Activated CD4-positive, alpha-beta T cell treated with anti-CD3 and anti-CD28 coated beads for 36 hours (primary cell): ENCODE measurements at regions of chr6 and their contacts with region 1.

Region 1: DNA sequence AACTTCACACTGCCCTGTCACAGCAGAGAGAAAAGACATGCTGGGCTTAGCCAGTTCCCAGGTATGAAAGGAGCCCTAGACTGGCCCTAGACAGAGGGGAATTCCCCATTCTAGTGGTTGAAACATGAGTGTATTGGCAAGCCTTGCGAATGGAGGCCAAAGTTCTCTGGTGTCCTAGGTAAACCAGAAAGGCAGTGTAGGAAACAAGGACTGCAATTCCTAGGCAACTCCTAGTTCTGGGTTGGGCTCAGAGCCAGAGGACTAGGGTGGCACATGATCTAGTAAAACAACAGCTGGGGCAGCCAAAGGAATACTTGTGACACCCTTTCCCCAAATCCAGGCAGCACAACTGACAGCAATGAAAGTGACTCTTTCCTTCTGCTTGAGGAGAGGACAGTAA is 265.0 kb upstream of the EPHA7 start:
- DNase-seq: no peak
- ATAC-seq: no peak
- H3K4me3 Mint-ChIP-seq: no peak overlapping the region
- H3K27ac Mint-ChIP-seq: no peak overlapping the region
- H3K4me1 Mint-ChIP-seq: no peaks in the 10 kb centered on the region
- H3K27me3 Mint-ChIP-seq: no peaks in the 10 kb centered on the region

Region 2: GRCh38 chr6:92479831-92480230 is 1204.5 kb before region 1 on chr6:
- CTCF ChIA-PET with region 1: no interaction called
- POLR2A ChIA-PET with region 1: no interaction called
- intact Hi-C with region 1: loop called in 1 of 2 experiments (anchors 10 kb)
- DNase-seq: no peak
- ATAC-seq: no peak
- H3K4me3 Mint-ChIP-seq: no peak overlapping the region
- H3K27ac Mint-ChIP-seq: no peak overlapping the region
- H3K4me1 Mint-ChIP-seq: no peaks in the 10 kb centered on the region
- H3K27me3 Mint-ChIP-seq: no peaks in the 10 kb centered on the region

Region 3: DNA sequence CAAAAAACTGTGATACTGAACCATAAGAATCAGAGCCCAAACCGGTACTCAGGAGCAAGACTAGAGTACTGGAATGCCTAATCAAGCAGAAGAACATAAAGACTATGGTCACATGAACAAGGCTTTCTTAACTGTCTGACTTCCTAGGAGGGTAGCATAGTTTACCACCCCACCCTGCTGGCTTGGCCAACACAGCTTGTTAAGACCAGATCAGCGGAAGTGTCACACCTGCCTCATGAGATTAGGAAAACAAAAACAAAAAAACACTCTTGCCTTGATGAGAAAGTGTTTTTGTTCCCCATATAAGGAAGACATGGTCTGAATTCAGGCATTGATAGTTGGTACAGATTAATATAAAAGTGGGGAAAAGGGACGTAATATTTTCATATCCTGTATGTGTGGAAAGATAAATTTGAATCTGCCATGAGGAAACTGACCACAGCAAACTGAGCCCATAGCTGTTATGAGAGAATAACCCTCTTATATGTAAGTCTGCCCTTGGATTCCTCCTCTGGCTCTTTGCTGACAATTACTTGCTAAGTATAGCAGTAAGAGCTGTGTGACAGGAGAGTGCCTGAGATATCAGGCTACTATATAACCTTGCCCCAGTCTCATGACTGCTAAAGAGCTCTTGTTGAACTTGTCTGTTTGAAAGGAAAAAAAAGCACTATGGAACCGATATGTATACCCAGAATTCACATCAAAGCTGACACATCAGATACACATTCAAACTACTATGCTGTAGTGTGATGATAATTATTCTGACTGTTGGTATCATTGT is 462.1 kb before region 1 on chr6:
- CTCF ChIA-PET with region 1: no interaction called
- POLR2A ChIA-PET with region 1: no interaction called
- intact Hi-C with region 1: no loop called
- DNase-seq: no peak
- ATAC-seq: no peak
- H3K4me3 Mint-ChIP-seq: no peak overlapping the region
- H3K27ac Mint-ChIP-seq: no peak overlapping the region
- H3K4me1 Mint-ChIP-seq: no peaks in the 10 kb centered on the region
- H3K27me3 Mint-ChIP-seq: no peaks in the 10 kb centered on the region

Region 4: DNA sequence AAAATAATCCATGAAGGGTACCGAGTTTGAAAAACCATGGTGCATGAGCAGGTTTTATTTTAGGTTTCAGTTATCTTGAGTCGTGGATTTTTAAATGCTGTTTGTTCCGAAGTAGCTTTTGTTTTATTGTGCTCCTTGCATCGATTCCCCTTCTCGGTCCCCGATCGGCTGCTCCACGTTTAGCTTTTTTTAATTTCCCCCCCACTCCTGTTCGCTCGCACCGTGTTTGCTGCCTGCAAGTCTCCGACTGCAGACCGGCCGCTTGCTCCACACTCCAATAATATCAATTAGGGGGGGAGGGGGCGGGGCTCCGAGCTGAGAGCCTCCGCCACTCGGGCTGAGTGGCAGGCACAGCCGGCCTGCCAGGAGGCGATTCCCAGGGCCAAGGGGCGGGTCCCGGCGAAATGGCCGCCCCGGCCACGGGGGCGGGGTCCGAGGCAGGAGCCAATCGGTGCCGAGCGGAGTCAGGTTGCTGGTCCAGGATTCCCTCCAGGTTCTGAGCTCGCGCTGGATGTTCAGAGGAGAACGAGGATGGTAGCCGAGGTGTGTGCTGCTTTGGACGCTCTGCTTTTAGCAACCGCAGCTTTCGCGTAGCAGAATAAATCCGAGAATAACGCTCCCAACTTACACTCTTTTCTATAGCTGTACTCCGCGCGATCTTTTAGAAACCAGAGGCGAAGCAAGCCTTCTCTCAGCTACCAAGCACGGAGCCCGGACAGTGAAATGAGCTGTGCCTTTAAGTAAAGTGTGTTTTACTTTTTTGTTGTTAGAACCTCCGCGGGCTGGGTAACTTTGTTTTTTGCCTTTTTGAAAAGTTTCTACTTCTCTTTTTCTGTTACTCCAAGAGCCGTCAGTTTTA is 264.8 kb before region 1 on chr6 and contains the start of gene EPHA7:
- CTCF ChIA-PET with region 1: no interaction called
- POLR2A ChIA-PET with region 1: no interaction called
- intact Hi-C with region 1: no loop called
- DNase-seq: peak; percentile 65
- ATAC-seq: peak; percentile 86
- H3K4me3 Mint-ChIP-seq: peak within 1 kb of the TSS; percentile 49
- H3K27ac Mint-ChIP-seq: no peak within 1 kb of the TSS
- H3K4me1 Mint-ChIP-seq: peaks cover 12% of the 10 kb centered on the region
- H3K27me3 Mint-ChIP-seq: peaks cover 43% of the 10 kb centered on the region
- total RNA-seq, gene EPHA7: not detected